CD4-positive, alpha-beta T cell (primary cell): ENCODE measurements at regions of chr1 and their contacts with region 1.

Region 1: GRCh38 chr1:20151906-20152598 is 12.9 kb downstream of the PLA2G2F start:
- DNase-seq: peak; percentile 64 to 87 (median 73)
- ATAC-seq: peak; percentile 91
- H3K4me3 ChIP-seq: peak overlapping the region; percentile 62
- H3K4me3 Mint-ChIP-seq: peak overlapping the region; percentile 81
- H3K27ac ChIP-seq: no peak overlapping the region
- H3K27ac Mint-ChIP-seq: no peak overlapping the region
- H3K4me1 ChIP-seq: peaks cover 21% of the 10 kb centered on the region
- H3K4me1 Mint-ChIP-seq: peaks cover 12% of the 10 kb centered on the region
- H3K27me3 ChIP-seq: no peaks in the 10 kb centered on the region
- H3K27me3 Mint-ChIP-seq: no peaks in the 10 kb centered on the region
- CTCF ChIP-seq: peak; percentile 91

Region 2: GRCh38 chr1:19715334-19716203 is 436.5 kb before region 1 on chr1:
- CTCF ChIA-PET with region 1: no interaction called
- POLR2A ChIA-PET with region 1: no interaction called
- intact Hi-C with region 1: loop called in 1 of 2 experiments (anchors 5 kb)
- DNase-seq: peak; percentile 64 to 92 (median 77)
- ATAC-seq: peak; percentile 98
- H3K4me3 ChIP-seq: no peak overlapping the region
- H3K4me3 Mint-ChIP-seq: no peak overlapping the region
- H3K27ac ChIP-seq: no peak overlapping the region
- H3K27ac Mint-ChIP-seq: no peak overlapping the region
- H3K4me1 ChIP-seq: peaks cover 13% of the 10 kb centered on the region
- H3K4me1 Mint-ChIP-seq: peaks cover 15% of the 10 kb centered on the region
- H3K27me3 ChIP-seq: no peaks in the 10 kb centered on the region
- H3K27me3 Mint-ChIP-seq: no peaks in the 10 kb centered on the region
- CTCF ChIP-seq: peak; percentile 77

Region 3: DNA sequence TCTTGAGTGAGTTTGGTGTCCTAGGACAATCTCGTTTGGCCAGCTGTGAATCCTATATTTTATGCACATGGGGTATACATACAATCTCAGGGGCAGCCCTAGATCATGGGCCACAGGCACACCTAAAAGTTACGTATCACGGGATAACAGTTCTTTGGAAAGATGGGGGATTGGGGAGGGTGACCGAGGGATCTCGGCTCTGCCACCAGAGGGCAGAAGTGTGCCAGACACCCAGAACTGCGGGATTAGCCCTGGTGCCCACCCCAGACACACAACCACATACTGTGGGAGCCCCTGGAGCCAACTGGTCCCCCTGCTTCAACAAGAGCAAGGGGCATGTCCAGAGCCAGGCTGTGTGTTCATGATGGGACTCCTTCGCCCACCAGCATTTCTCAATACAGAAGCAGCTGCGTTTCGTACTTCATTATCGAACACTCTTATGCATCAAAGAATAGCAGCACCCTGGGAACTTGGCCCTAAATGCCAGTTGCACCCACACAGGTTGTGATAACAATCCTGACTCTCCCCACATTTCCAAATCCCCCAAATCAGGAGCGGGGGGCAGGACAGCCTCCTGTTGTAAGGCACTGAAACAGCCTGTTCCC is 389.8 kb before region 1 on chr1:
- CTCF ChIA-PET with region 1: no interaction called
- POLR2A ChIA-PET with region 1: no interaction called
- intact Hi-C with region 1: loop called (anchors 5 to 10 kb)
- DNase-seq: peak in 10 of 14 experiments; percentile 4 to 52 (median 20)
- ATAC-seq: no peak
- H3K4me3 ChIP-seq: no peak overlapping the region
- H3K4me3 Mint-ChIP-seq: no peak overlapping the region
- H3K27ac ChIP-seq: no peak overlapping the region
- H3K27ac Mint-ChIP-seq: no peak overlapping the region
- H3K4me1 ChIP-seq: no peaks in the 10 kb centered on the region
- H3K4me1 Mint-ChIP-seq: peaks cover 9% of the 10 kb centered on the region
- H3K27me3 ChIP-seq: no peaks in the 10 kb centered on the region
- H3K27me3 Mint-ChIP-seq: no peaks in the 10 kb centered on the region
- CTCF ChIP-seq: peak; percentile 58

Region 4: DNA sequence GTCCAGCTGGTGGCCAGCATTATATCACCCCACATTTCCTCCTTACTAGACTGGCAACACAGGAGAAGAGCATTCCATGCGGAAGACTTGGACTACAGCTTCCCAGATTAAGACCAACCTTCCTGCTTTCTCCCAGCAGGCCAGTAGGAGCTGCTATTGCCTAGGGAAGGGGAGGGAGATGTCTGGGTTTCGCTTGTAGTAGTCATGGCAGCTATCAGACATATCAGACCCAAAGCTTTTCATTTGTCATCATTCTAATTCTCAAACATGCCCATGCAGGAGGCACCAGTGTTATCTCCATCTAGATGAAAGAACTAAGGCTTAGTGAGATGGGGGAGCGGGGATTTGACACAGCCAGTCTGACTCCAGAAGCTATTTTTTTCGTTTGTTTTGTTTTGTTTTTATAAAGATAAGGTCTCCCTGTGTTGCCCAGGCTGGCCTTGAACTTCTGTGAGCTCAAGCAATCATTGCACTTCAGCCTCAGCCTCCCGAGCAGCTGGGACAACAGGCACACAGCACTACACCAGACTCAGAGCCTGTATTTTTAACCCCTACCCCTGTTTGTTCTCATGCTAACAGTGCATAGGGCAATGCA is 177.1 kb before region 1 on chr1:
- CTCF ChIA-PET with region 1: interaction called, 3 read pairs
- POLR2A ChIA-PET with region 1: no interaction called
- intact Hi-C with region 1: loop called in 1 of 2 experiments (anchors 2 kb)
- DNase-seq: peak in 5 of 14 experiments; percentile 5 to 52 (median 36)
- ATAC-seq: no peak
- H3K4me3 ChIP-seq: no peak overlapping the region
- H3K4me3 Mint-ChIP-seq: no peak overlapping the region
- H3K27ac ChIP-seq: no peak overlapping the region
- H3K27ac Mint-ChIP-seq: no peak overlapping the region
- H3K4me1 ChIP-seq: no peaks in the 10 kb centered on the region
- H3K4me1 Mint-ChIP-seq: no peaks in the 10 kb centered on the region
- H3K27me3 ChIP-seq: peaks cover 0 to 6% of the 10 kb centered on the region in 2 experiments
- H3K27me3 Mint-ChIP-seq: peaks cover 51% of the 10 kb centered on the region
- CTCF ChIP-seq: no peak

Region 5: DNA sequence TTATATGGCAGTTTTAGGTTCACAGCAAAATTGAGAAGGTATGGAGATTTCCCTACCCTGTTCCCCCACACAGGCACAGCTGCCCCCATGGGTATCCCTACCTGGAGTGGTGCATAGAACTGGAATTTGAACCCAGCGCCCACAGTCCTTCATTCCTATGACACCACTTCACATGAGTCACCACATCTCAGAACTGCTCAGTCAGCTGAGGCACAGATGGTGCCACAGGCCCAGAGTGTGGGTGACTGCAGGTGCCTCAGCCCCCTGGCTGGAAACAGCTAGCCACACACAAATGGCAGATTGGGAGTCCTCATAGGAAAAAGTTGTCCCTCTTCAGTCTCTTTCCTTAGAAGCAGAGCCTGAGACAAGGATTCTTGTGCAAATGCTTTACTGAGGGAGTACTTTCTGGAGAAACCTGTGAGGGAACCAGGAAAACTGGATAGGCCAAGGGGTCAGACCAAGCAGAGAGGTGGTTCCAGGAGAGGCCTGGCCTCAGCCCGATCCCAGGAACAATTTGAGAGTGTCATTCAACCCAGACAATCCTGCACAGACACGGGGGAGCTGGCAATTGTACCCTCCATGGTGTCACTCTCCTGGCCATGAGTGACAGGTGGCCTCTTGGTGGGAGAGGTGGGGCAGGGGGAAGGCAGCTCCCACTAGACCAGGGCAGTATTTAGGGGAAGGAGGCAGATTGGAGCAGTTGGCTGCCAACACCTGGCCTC is 39.6 kb before region 1 on chr1:
- CTCF ChIA-PET with region 1: no interaction called
- POLR2A ChIA-PET with region 1: no interaction called
- intact Hi-C with region 1: no loop called
- DNase-seq: no peak
- ATAC-seq: no peak
- H3K4me3 ChIP-seq: no peak overlapping the region
- H3K4me3 Mint-ChIP-seq: no peak overlapping the region
- H3K27ac ChIP-seq: no peak overlapping the region
- H3K27ac Mint-ChIP-seq: no peak overlapping the region
- H3K4me1 ChIP-seq: no peaks in the 10 kb centered on the region
- H3K4me1 Mint-ChIP-seq: no peaks in the 10 kb centered on the region
- H3K27me3 ChIP-seq: peaks cover 0 to 5% of the 10 kb centered on the region in 2 experiments
- H3K27me3 Mint-ChIP-seq: peaks cover 18% of the 10 kb centered on the region
- CTCF ChIP-seq: no peak

Region 6: GRCh38 chr1:20194757-20195461 is 42.9 kb after region 1 on chr1:
- CTCF ChIA-PET with region 1: interaction called, 9 read pairs
- POLR2A ChIA-PET with region 1: no interaction called
- intact Hi-C with region 1: loop called in 1 of 2 experiments (anchors 1 kb)
- DNase-seq: peak; percentile 59 to 83 (median 70)
- ATAC-seq: peak; percentile 67
- H3K4me3 ChIP-seq: no peak overlapping the region
- H3K4me3 Mint-ChIP-seq: no peak overlapping the region
- H3K27ac ChIP-seq: no peak overlapping the region
- H3K27ac Mint-ChIP-seq: no peak overlapping the region
- H3K4me1 ChIP-seq: peaks cover 4% of the 10 kb centered on the region
- H3K4me1 Mint-ChIP-seq: no peaks in the 10 kb centered on the region
- H3K27me3 ChIP-seq: peaks cover 0 to 2% of the 10 kb centered on the region in 2 experiments
- H3K27me3 Mint-ChIP-seq: peaks cover 5% of the 10 kb centered on the region
- CTCF ChIP-seq: peak; percentile 72